ENCODE measurements at regions of chr2 and their contacts with region 1.

Region 1: DNA sequence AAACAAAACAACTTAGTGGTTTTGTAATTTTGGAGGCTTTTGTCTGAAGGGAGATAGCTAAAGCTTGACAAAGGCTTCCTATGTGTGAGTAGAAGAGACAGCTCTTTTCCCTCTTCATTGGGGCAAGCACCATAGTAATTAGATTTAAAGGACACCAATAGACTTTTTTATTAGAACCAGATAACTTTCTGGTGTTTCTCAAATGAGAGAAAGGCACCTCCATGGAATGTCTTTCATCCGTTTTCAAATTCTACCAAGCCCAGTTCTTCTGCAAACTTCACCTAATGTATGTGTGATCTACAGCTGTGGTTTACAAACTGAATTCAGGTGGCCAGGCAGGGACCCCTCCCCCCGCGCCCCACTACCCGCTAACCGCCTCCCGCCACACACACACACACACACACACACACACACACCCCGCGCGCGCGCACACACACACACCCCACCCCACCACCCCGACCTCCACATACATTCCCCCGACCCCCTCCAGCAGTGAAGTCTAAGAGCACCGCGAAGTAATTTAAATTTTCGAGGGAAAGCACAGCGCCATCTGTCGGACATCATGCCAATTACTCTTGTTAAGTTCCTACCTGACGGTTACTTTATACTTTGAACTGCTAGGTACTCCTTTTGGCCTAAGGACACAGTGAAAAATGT is 31.6 kb upstream of the PPP1R1C start:
- DNase-seq: peak in 1 of 2 experiments; percentile 80
- H3K4me3 ChIP-seq: no peak overlapping the region
- H3K27ac ChIP-seq: no peak overlapping the region
- H3K4me1 ChIP-seq: peaks cover 18% of the 10 kb centered on the region
- H3K27me3 ChIP-seq: no peaks in the 10 kb centered on the region
- CTCF ChIP-seq: peak; percentile 69

Region 2: DNA sequence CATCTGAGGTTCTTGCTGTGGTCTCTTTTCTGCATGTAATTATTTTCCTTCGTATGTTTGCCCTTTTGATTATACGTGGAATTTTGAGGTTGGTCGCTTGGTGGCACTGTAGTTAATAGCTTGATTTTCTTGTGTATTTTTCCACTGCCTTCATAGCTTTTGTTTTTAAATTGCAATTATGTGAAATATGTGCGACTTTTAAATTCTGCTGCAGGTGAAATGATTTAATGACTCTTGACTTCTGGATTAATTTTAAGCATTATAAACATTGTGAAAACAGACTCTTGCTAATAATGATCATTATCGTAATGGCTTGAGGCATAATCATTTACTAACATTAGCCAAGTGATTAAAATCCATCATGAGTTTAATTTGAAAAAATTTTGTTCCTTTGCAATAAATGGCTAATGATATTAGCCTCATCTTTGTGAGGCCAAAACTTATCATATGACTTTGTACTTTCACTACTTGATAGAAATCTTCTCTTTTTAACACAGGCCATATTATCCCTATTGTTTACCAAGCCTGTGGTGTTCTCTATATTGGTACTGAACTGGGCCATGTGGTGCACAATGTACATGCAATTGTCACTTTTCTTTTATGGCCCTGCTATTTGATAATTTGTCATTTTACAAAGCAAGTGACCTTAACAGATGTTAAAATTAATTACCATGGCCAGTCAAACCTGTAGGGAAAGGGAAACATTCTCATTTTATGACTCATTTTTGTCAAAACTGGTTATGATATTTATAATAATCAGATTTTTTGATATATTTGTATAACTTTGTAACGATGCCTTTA is 210.9 kb before region 1 on chr2:
- CTCF ChIA-PET with region 1: interaction called, 8 read pairs
- POLR2A ChIA-PET with region 1: no interaction called
- intact Hi-C with region 1: loop called (anchors 1 kb)
- DNase-seq: peak; percentile 50 to 59
- H3K4me3 ChIP-seq: no peak overlapping the region
- H3K27ac ChIP-seq: no peak overlapping the region
- H3K4me1 ChIP-seq: peaks cover 14% of the 10 kb centered on the region
- H3K27me3 ChIP-seq: no peaks in the 10 kb centered on the region
- CTCF ChIP-seq: peak; percentile 95

Region 3: DNA sequence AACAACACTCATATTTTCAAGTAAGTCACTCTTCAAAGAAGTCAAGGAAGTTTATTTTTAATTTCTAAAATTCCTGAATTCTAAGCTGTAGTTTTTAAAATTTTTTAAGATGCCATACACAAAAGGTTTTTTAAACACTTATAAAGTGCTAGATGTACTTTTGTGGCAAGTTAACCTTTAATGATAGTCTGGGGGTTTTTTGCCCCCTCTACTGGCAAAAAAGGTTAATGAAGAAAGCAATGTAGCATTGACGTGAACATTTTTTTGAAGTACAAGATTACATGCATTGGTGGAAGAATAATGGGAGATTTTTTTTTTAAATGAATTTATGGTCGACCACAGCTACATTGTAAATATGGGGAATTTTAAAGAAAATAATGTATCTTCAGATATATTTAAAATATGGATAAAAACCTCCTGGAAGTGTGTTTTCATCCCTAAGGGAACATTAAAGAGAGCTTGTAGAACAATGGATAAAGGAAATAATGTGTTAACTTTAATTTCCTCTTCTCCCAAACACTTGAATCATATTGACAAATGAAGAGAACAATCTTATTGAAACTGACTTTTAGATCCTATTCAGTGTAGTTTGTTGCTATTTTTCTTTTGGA is 49.9 kb before region 1 on chr2:
- CTCF ChIA-PET with region 1: interaction called, 12 read pairs
- POLR2A ChIA-PET with region 1: interaction called, 3 read pairs
- intact Hi-C with region 1: loop called (anchors 2 kb)
- DNase-seq: peak; percentile 15 to 60
- H3K4me3 ChIP-seq: no peak overlapping the region
- H3K27ac ChIP-seq: no peak overlapping the region
- H3K4me1 ChIP-seq: 0 out of 2 replicates have a peak, but pooled peaks cover 9% of the 10 kb centered on the region
- H3K27me3 ChIP-seq: no peaks in the 10 kb centered on the region
- CTCF ChIP-seq: peak; percentile 86

Region 4: GRCh38 chr2:182068769-182069257 is 114.8 kb after region 1 on chr2:
- CTCF ChIA-PET with region 1: no interaction called
- POLR2A ChIA-PET with region 1: no interaction called
- intact Hi-C with region 1: loop called (anchors 2 kb)
- DNase-seq: peak; percentile 21 to 82
- H3K4me3 ChIP-seq: no peak overlapping the region
- H3K27ac ChIP-seq: peak overlapping the region; percentile 74
- H3K4me1 ChIP-seq: peaks cover 23% of the 10 kb centered on the region
- H3K27me3 ChIP-seq: no peaks in the 10 kb centered on the region
- CTCF ChIP-seq: no peak

Region 5: GRCh38 chr2:183214680-183215079 is 1260.7 kb after region 1 on chr2:
- CTCF ChIA-PET with region 1: no interaction called
- POLR2A ChIA-PET with region 1: no interaction called
- intact Hi-C with region 1: no loop called
- DNase-seq: no peak
- H3K4me3 ChIP-seq: no peak overlapping the region
- H3K27ac ChIP-seq: no peak overlapping the region
- H3K4me1 ChIP-seq: no peaks in the 10 kb centered on the region
- H3K27me3 ChIP-seq: no peaks in the 10 kb centered on the region
- CTCF ChIP-seq: no peak